Activated CD4-positive, alpha-beta T cell treated with anti-CD3 and anti-CD28 coated beads for 36 hours (primary cell): ENCODE measurements at regions of chr4 and their contacts with region 1.

Region 1: GRCh38 chr4:16289897-16290554 is 63.8 kb upstream of the TAPT1 start:
- DNase-seq: no peak
- ATAC-seq: no peak
- H3K4me3 Mint-ChIP-seq: no peak overlapping the region
- H3K27ac Mint-ChIP-seq: no peak overlapping the region
- H3K4me1 Mint-ChIP-seq: peaks cover 4% of the 10 kb centered on the region
- H3K27me3 Mint-ChIP-seq: peaks cover 9% of the 10 kb centered on the region

Region 2: DNA sequence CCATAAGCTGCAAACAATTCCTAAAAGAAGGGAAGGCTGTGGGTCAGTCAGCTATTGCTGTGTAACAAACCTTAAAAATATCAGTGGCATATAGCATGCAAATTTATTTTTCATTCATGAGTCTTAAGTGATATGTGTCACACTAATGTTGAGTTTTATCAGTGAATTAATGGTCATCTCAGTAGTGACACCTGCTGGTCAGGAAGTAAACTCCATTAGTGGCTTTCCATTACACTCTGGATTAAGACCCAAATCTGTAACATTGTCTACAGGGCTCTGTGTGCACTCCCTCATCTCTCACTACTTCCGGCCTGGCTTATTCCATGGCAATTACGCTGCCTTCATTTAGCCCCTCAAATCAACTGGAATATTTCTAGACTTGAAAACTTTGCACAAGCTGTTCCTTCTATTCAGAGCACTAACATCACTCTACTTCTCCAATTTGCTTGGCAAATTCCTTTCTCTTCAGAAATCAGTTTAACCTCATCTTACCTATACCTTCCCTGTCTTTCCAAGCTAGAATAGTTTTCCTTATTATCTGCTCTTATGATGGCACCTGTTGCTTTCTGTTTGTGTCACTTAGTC is 153.6 kb after region 1 on chr4:
- CTCF ChIA-PET with region 1: interaction called, 9 read pairs
- POLR2A ChIA-PET with region 1: no interaction called
- intact Hi-C with region 1: loop called (anchors 1 kb)
- DNase-seq: no peak
- ATAC-seq: peak; percentile 44
- H3K4me3 Mint-ChIP-seq: no peak overlapping the region
- H3K27ac Mint-ChIP-seq: no peak overlapping the region
- H3K4me1 Mint-ChIP-seq: no peaks in the 10 kb centered on the region
- H3K27me3 Mint-ChIP-seq: peaks cover 4% of the 10 kb centered on the region

Region 3: GRCh38 chr4:16667464-16667863 is 377.4 kb after region 1 on chr4:
- CTCF ChIA-PET with region 1: no interaction called
- POLR2A ChIA-PET with region 1: no interaction called
- intact Hi-C with region 1: no loop called
- DNase-seq: no peak
- ATAC-seq: no peak
- H3K4me3 Mint-ChIP-seq: no peak overlapping the region
- H3K27ac Mint-ChIP-seq: no peak overlapping the region
- H3K4me1 Mint-ChIP-seq: no peaks in the 10 kb centered on the region
- H3K27me3 Mint-ChIP-seq: no peaks in the 10 kb centered on the region

Region 4: DNA sequence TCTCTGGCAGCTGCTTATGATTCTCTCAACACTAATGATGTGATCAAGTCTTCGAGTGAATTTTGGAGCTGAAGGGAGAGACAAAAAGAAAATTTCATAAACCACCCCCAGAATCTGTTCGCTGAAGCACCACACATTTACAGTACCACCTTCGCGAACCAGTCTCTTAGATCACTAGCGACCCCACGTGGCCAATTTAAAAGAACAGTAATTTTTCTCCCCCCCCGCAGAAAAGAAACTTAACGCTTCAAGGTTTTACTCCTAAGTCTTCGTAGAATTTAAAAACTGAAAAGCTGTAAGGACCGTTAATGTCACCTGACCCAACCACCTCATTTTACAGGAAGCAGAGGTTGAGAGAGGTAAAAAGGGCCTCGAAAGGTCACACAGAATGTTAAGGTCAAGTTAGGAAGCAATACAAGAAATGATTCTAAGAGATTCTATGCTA is 1034.4 kb after region 1 on chr4:
- CTCF ChIA-PET with region 1: interaction called, 4 read pairs
- POLR2A ChIA-PET with region 1: no interaction called
- intact Hi-C with region 1: loop called (anchors 1 to 10 kb)
- DNase-seq: peak; percentile 75
- ATAC-seq: peak; percentile 84
- H3K4me3 Mint-ChIP-seq: no peak overlapping the region
- H3K27ac Mint-ChIP-seq: peak overlapping the region; percentile 32
- H3K4me1 Mint-ChIP-seq: peaks cover 14% of the 10 kb centered on the region
- H3K27me3 Mint-ChIP-seq: no peaks in the 10 kb centered on the region

Region 5: DNA sequence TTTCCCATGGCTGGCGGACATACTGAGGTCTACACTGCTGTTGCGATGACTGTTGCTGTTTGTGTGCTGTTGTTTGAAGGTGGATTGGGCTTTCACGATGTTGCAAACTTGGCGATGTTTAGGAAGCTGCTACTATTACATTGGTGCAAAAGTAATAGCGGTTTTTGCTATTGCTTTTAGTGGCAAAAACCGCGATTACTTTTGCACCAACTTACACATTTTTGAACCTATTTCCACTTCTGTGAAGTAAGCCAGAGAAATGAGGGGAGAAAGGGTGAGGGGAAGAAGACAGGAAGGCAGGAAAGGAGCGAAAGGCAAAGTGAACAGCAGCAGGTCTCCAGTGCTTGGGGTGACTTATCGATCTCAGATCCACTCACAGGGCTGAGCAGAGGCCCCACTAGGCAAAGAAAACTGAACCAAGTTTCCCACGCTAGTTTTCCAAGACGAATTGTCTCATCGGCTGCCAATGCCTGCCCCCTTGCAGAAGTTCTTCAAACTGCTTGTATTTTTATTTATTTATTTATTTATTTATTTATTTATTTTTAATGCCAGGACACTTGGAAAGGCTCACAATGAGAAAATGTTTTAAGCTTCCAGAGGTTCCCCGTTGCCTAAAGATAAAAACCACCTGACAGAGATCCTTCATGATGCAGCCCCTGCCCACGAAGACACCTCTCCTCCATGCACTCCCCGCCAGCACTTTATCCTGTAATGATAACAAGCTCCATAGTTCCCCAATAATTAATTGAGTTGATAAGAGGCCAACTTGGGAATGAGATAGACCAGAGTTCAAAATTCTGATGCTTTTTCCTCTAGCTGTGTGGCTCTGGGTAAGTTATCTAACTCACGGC is 1178.6 kb after region 1 on chr4:
- CTCF ChIA-PET with region 1: interaction called, 5 read pairs
- POLR2A ChIA-PET with region 1: no interaction called
- intact Hi-C with region 1: loop called (anchors 1 kb)
- DNase-seq: peak; percentile 23
- ATAC-seq: no peak
- H3K4me3 Mint-ChIP-seq: no peak overlapping the region
- H3K27ac Mint-ChIP-seq: no peak overlapping the region
- H3K4me1 Mint-ChIP-seq: peaks cover 2% of the 10 kb centered on the region
- H3K27me3 Mint-ChIP-seq: no peaks in the 10 kb centered on the region